ENCODE measurements at regions of chr5 and their contacts with region 1.

Region 1: DNA sequence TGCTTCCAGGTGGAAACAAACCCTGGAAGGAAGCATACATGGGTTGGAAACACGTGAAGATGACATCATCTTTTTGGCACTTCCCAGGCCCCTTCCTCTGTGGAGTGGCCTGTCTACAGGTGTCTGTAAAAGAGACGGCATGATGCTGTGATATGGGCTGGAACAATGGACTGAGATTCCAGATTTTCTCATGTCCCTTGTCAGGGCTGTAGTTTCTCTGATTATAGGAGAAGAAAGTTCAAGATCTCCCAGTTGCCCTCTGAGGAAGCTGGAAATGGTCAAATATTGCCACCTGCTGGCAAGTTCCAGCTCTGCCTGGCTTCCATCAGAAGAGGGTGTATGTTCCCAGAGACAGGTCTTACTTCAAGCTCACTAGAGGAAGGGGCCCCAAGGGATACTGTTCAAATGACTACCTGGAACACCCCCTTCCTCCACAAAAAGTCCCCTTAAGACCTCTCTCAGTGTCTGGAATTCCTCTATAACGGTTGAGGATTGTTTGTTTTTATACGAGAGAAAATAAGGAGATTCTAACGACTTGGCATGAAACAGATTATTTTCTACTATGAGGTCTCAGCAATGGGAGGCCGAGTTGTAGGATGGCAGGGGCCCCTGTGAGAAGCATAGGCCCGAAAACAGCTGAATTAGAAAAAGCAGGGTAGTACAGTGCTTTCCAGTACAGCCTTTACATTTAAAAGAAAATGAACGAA is 7.3 kb upstream of the ANXA6 start:
- DNase-seq: peak; percentile 91
- H3K4me3 ChIP-seq: no peak overlapping the region
- H3K27ac ChIP-seq: no peak overlapping the region
- H3K4me1 ChIP-seq: peaks cover 8% of the 10 kb centered on the region
- H3K27me3 ChIP-seq: peaks cover 0 to 1% of the 10 kb centered on the region in 2 experiments
- CTCF ChIP-seq: peak; percentile 79 to 90
- POLR2A ChIP-seq: no peak

Region 2: GRCh38 chr5:150801117-150801927 is 363.5 kb before region 1 on chr5:
- CTCF ChIA-PET with region 1: interaction called, 15 read pairs
- POLR2A ChIA-PET with region 1: no interaction called
- dilution Hi-C with region 1: no loop called
- intact Hi-C with region 1: no loop called
- DNase-seq: peak; percentile 80
- H3K4me3 ChIP-seq: peak overlapping the region in 2 of 3 experiments; percentile 14 to 24
- H3K27ac ChIP-seq: no peak overlapping the region
- H3K4me1 ChIP-seq: no peaks in the 10 kb centered on the region
- H3K27me3 ChIP-seq: peaks cover 15 to 44% of the 10 kb centered on the region in 2 experiments
- CTCF ChIP-seq: peak; percentile 31 to 53
- POLR2A ChIP-seq: no peak

Region 3: GRCh38 chr5:151134238-151134637 is 30.6 kb before region 1 on chr5:
- CTCF ChIA-PET with region 1: interaction called, 409 read pairs
- POLR2A ChIA-PET with region 1: no interaction called
- dilution Hi-C with region 1: no loop called
- intact Hi-C with region 1: no loop called
- DNase-seq: no peak
- H3K4me3 ChIP-seq: no peak overlapping the region
- H3K27ac ChIP-seq: no peak overlapping the region
- H3K4me1 ChIP-seq: no peaks in the 10 kb centered on the region
- H3K27me3 ChIP-seq: no peaks in the 10 kb centered on the region
- CTCF ChIP-seq: no peak
- POLR2A ChIP-seq: no peak

Region 4: GRCh38 chr5:151150471-151151262 is 14.2 kb before region 1 on chr5:
- CTCF ChIA-PET with region 1: interaction called, 32 read pairs
- POLR2A ChIA-PET with region 1: no interaction called
- dilution Hi-C with region 1: no loop called
- intact Hi-C with region 1: no loop called
- DNase-seq: peak; percentile 38
- H3K4me3 ChIP-seq: no peak overlapping the region
- H3K27ac ChIP-seq: no peak overlapping the region
- H3K4me1 ChIP-seq: peaks cover 27% of the 10 kb centered on the region
- H3K27me3 ChIP-seq: no peaks in the 10 kb centered on the region
- CTCF ChIP-seq: no peak
- POLR2A ChIP-seq: no peak

Region 5: GRCh38 chr5:151239237-151239861 is 74.5 kb after region 1 on chr5:
- CTCF ChIA-PET with region 1: interaction called, 33 read pairs
- POLR2A ChIA-PET with region 1: no interaction called
- dilution Hi-C with region 1: no loop called
- intact Hi-C with region 1: loop called (anchors 1 kb)
- DNase-seq: peak; percentile 67
- H3K4me3 ChIP-seq: no peak overlapping the region
- H3K27ac ChIP-seq: no peak overlapping the region
- H3K4me1 ChIP-seq: no peaks in the 10 kb centered on the region
- H3K27me3 ChIP-seq: no peaks in the 10 kb centered on the region
- CTCF ChIP-seq: peak; percentile 73 to 88
- POLR2A ChIP-seq: no peak

Measured in endothelial cell of umbilical vein (primary cell).